GM12878 (cell line): ENCODE measurements at regions of chr22 and their contacts with region 1.

Region 1: GRCh38 chr22:42717197-42717928 is 3.3 kb downstream of the A4GALT start:
- DNase-seq: no peak
- ATAC-seq: peak; percentile 36
- H3K4me3 ChIP-seq: peak overlapping the region; percentile 49
- H3K27ac ChIP-seq: peak overlapping the region; percentile 81
- H3K4me1 ChIP-seq: peaks cover 41% of the 10 kb centered on the region
- H3K27me3 ChIP-seq: no peaks in the 10 kb centered on the region; a peak in 1 of 4 replicates
- CTCF ChIP-seq: no peak
- EP300 ChIP-seq: 0 out of 4 replicates have a peak, but pooled peaks of 1 of the 2 experiments have one; percentile 2
- POLR2A ChIP-seq: no peak
- RAD21 ChIP-seq: no peak

Region 2: GRCh38 chr22:42688241-42689211 is 28.8 kb before region 1 on chr22:
- CTCF ChIA-PET with region 1: no interaction called
- POLR2A ChIA-PET with region 1: no interaction called
- RAD21 ChIA-PET with region 1: no interaction called
- SMC1A ChIA-PET with region 1: no interaction called
- in situ Hi-C with region 1: no loop called
- intact Hi-C with region 1: no loop called
- DNase-seq: no peak
- ATAC-seq: no peak
- H3K4me3 ChIP-seq: no peak overlapping the region
- H3K27ac ChIP-seq: no peak overlapping the region
- H3K4me1 ChIP-seq: peaks cover 16% of the 10 kb centered on the region
- H3K27me3 ChIP-seq: no peaks in the 10 kb centered on the region
- CTCF ChIP-seq: no peak
- EP300 ChIP-seq: no peak
- POLR2A ChIP-seq: no peak
- RAD21 ChIP-seq: no peak

Region 3: DNA sequence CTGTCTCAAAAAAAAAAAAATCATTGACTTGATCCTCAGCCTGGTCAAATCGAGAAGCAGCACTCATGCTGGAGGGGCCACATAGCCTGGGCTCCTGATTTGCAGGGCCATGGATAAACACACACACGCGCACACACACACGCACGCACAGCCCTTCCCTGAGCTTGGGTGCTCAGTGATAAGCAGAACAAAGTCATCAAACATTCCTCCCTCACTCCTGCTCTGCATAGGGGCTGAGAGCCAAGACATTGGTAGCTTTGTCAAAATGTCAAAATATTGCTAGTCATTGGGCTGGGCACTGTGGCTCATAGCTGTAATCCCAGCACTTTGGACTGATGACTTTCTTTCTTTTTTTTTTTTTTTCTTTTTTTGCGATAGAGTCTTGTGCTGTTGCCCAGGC is 37.3 kb after region 1 on chr22:
- CTCF ChIA-PET with region 1: interaction called, 3 read pairs
- POLR2A ChIA-PET with region 1: interaction called, 8 read pairs
- RAD21 ChIA-PET with region 1: interaction called, 17 read pairs
- SMC1A ChIA-PET with region 1: interaction called, 10 read pairs
- in situ Hi-C with region 1: no loop called
- intact Hi-C with region 1: no loop called
- DNase-seq: no peak
- ATAC-seq: no peak
- H3K4me3 ChIP-seq: no peak overlapping the region
- H3K27ac ChIP-seq: no peak overlapping the region
- H3K4me1 ChIP-seq: peaks cover 22% of the 10 kb centered on the region
- H3K27me3 ChIP-seq: no peaks in the 10 kb centered on the region
- CTCF ChIP-seq: no peak
- EP300 ChIP-seq: no peak
- POLR2A ChIP-seq: no peak
- RAD21 ChIP-seq: no peak

Region 4: GRCh38 chr22:42769574-42770447 is 52.4 kb after region 1 on chr22:
- CTCF ChIA-PET with region 1: no interaction called
- POLR2A ChIA-PET with region 1: interaction called, 5 read pairs
- RAD21 ChIA-PET with region 1: interaction called, 14 read pairs
- SMC1A ChIA-PET with region 1: interaction called, 12 read pairs
- in situ Hi-C with region 1: no loop called
- intact Hi-C with region 1: loop called (anchors 2 kb)
- DNase-seq: peak; percentile 44
- ATAC-seq: peak; percentile 92
- H3K4me3 ChIP-seq: peak overlapping the region; percentile 28; the same call in 1 of the 2 replicates
- H3K27ac ChIP-seq: peak overlapping the region; percentile 70
- H3K4me1 ChIP-seq: peaks cover 43% of the 10 kb centered on the region
- H3K27me3 ChIP-seq: no peaks in the 10 kb centered on the region; a peak in 1 of 4 replicates
- CTCF ChIP-seq: no peak
- EP300 ChIP-seq: peak; percentile 75 to 82
- POLR2A ChIP-seq: 0 out of 2 replicates have a peak, but pooled peaks have one; percentile 23
- RAD21 ChIP-seq: no peak

Region 5: GRCh38 chr22:42856865-42857704 is 139.7 kb after region 1 on chr22 and contains the start of gene ARFGAP3:
- CTCF ChIA-PET with region 1: no interaction called
- POLR2A ChIA-PET with region 1: interaction called, 11 read pairs
- RAD21 ChIA-PET with region 1: interaction called, 9 read pairs
- SMC1A ChIA-PET with region 1: interaction called, 3 read pairs
- in situ Hi-C with region 1: no loop called
- intact Hi-C with region 1: no loop called
- DNase-seq: peak; percentile 64
- ATAC-seq: peak; percentile 94
- H3K4me3 ChIP-seq: peak within 1 kb of the TSS; percentile 90
- H3K27ac ChIP-seq: peak within 1 kb of the TSS; percentile 94
- H3K4me1 ChIP-seq: peaks cover 5% of the 10 kb centered on the region
- H3K27me3 ChIP-seq: no peaks in the 10 kb centered on the region
- CTCF ChIP-seq: no peak
- EP300 ChIP-seq: peak in 1 of 2 experiments; percentile 15; a peak in 1 of 4 replicates
- POLR2A ChIP-seq: peak; percentile 89
- RAD21 ChIP-seq: no peak
- polyA plus RNA-seq, gene ARFGAP3: 39.1 to 42.0 TPM